ENCODE measurements at regions of chr7 and their contacts with region 1.

Region 1: DNA sequence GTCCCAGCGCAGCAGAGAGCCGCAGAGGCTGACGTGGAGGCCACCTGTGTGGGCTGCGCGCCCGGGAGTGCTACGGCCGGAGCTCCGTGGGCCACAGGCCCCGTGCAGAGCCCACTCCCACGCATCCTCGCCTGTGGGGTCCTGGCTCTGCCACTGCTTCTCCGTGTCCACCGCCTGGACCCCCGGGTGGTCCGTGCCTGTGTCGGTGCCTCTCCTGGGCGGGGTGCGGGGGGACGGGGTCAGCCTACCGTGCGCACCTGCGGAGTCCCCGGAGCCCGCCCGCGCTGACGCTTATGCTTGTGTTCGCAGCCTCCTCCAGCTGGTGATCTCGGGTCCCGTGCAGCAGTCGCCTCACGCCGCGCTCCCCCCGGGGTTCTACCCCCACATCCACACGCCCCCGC is 7.8 kb upstream of the ZNF853 start:
- DNase-seq: no peak
- H3K4me3 ChIP-seq: no peak overlapping the region
- H3K27ac ChIP-seq: no peak overlapping the region
- H3K4me1 ChIP-seq: no peaks in the 10 kb centered on the region
- H3K27me3 ChIP-seq: no peaks in the 10 kb centered on the region
- CTCF ChIP-seq: no peak

Region 2: GRCh38 chr7:6460303-6460702 is 147.3 kb before region 1 on chr7:
- CTCF ChIA-PET with region 1: no interaction called
- dilution Hi-C with region 1: no loop called
- in situ Hi-C with region 1: no loop called
- intact Hi-C with region 1: no loop called
- DNase-seq: no peak
- H3K4me3 ChIP-seq: no peak overlapping the region
- H3K27ac ChIP-seq: no peak overlapping the region
- H3K4me1 ChIP-seq: no peaks in the 10 kb centered on the region
- H3K27me3 ChIP-seq: no peaks in the 10 kb centered on the region
- CTCF ChIP-seq: no peak

Region 3: GRCh38 chr7:6637544-6638229 is 30.0 kb after region 1 on chr7:
- CTCF ChIA-PET with region 1: no interaction called
- dilution Hi-C with region 1: loop called (anchors 5 kb)
- in situ Hi-C with region 1: no loop called
- intact Hi-C with region 1: no loop called
- DNase-seq: no peak
- H3K4me3 ChIP-seq: peak overlapping the region; percentile 75 to 83 (median 81)
- H3K27ac ChIP-seq: no peak overlapping the region
- H3K4me1 ChIP-seq: peaks cover 7% of the 10 kb centered on the region
- H3K27me3 ChIP-seq: no peaks in the 10 kb centered on the region
- CTCF ChIP-seq: peak in 1 of 2 donors; percentile 41

Region 4: DNA sequence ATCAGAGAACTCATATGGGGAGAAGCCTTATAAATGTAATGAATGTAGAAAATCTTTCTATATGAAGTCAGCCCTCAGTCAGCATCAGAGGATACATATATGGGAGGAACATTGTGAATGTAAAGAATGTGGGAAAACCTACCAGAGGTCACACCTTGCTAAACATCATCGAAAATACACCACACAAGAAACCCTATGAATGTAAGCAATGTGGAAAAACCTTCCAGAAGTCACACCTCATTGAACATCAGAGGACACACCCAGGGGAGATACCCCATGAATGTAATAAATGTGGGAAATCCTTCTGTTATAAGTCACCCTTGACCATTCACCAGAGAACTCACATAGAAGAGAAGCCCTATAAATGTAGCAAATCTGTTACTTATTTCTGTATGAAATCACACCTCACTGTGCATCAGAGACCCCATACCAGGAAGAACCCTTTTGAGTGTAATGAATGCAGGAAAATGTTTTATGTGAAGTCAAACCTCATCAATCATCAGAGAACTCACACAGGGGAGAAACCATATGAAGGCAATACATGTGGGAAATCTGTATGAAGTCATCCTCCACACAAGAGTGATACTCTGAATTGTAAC is 68.3 kb after region 1 on chr7:
- CTCF ChIA-PET with region 1: no interaction called
- dilution Hi-C with region 1: loop called (anchors 5 kb)
- in situ Hi-C with region 1: no loop called
- intact Hi-C with region 1: no loop called
- DNase-seq: no peak
- H3K4me3 ChIP-seq: no peak overlapping the region
- H3K27ac ChIP-seq: no peak overlapping the region
- H3K4me1 ChIP-seq: no peaks in the 10 kb centered on the region
- H3K27me3 ChIP-seq: no peaks in the 10 kb centered on the region
- CTCF ChIP-seq: no peak